ENCODE measurements at regions of chr5 and their contacts with region 1.

Region 1: GRCh38 chr5:154072414-154073171 is 33.8 kb downstream of the MFAP3 start:
- DNase-seq: peak; percentile 76 to 91 (median 84)
- ATAC-seq: peak; percentile 97
- H3K4me3 ChIP-seq: no peak overlapping the region
- H3K27ac ChIP-seq: no peak overlapping the region
- H3K4me1 ChIP-seq: peaks cover 0 to 13% of the 10 kb centered on the region in 2 donors
- H3K27me3 ChIP-seq: no peaks in the 10 kb centered on the region
- CTCF ChIP-seq: peak; percentile 85 to 91

Region 2: DNA sequence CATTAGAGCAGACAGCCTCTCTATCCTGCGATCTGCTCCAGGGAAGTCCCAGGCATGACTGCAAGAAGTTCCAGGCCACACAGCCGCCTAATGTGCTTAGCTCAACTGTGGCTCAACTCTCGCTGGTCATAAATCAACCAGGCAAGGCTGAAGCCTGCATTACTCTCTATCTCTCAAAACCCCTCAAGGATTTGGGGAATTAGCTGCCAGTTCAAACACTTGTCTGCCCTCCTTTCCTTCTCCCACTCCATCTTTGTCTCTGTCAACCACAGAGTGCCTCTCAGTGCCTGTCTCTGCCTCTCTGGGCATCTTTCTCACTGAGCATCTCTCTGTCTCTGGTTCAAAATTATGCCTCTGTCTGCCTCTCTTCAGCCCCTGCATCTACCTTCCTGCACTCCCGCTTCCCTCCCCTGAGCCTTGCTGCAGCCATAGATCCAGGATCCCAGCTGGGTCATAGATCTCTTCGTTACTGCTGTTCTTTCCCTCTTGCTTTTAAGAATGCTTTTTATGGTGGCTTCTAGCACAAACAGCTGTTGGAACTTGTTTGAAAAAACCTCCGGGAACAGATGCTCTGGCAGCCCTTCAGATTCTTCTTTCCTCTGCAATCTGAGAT is 90.1 kb after region 1 on chr5:
- intact Hi-C with region 1: no loop called
- DNase-seq: peak in 1 of 4 donors; percentile 55
- ATAC-seq: peak; percentile 36
- H3K4me3 ChIP-seq: no peak overlapping the region
- H3K27ac ChIP-seq: no peak overlapping the region
- H3K4me1 ChIP-seq: no peaks in the 10 kb centered on the region
- H3K27me3 ChIP-seq: peaks cover 0 to 14% of the 10 kb centered on the region in 2 donors
- CTCF ChIP-seq: no peak

Region 3: GRCh38 chr5:154405078-154405792 is 332.6 kb after region 1 on chr5:
- intact Hi-C with region 1: loop called in 1 of 2 experiments (anchors 5 kb)
- DNase-seq: peak; percentile 69 to 92 (median 82)
- ATAC-seq: peak; percentile 99
- H3K4me3 ChIP-seq: peak overlapping the region; percentile 9 to 12
- H3K27ac ChIP-seq: no peak overlapping the region
- H3K4me1 ChIP-seq: peaks cover 0 to 12% of the 10 kb centered on the region in 2 donors
- H3K27me3 ChIP-seq: no peaks in the 10 kb centered on the region
- CTCF ChIP-seq: peak; percentile 67 to 87